ENCODE measurements at regions of chr1 and their contacts with region 1.

Region 1: GRCh38 chr1:185317034-185317885 is at the start of gene IVNS1ABP:
- DNase-seq: peak; percentile 91 to 99 (median 94)
- ATAC-seq: peak; percentile 72
- H3K4me3 ChIP-seq: peak within 1 kb of the TSS; percentile 92 to 97
- H3K4me3 Mint-ChIP-seq: peak within 1 kb of the TSS; percentile 97
- H3K27ac ChIP-seq: peak within 1 kb of the TSS; percentile 97
- H3K27ac Mint-ChIP-seq: peak within 1 kb of the TSS; percentile 99
- H3K4me1 ChIP-seq: peaks cover 38% of the 10 kb centered on the region
- H3K4me1 Mint-ChIP-seq: peaks cover 49% of the 10 kb centered on the region
- H3K27me3 ChIP-seq: no peaks in the 10 kb centered on the region
- H3K27me3 Mint-ChIP-seq: no peaks in the 10 kb centered on the region
- CTCF ChIP-seq: no peak
- total RNA-seq, gene IVNS1ABP: 227 to 237 TPM

Region 2: DNA sequence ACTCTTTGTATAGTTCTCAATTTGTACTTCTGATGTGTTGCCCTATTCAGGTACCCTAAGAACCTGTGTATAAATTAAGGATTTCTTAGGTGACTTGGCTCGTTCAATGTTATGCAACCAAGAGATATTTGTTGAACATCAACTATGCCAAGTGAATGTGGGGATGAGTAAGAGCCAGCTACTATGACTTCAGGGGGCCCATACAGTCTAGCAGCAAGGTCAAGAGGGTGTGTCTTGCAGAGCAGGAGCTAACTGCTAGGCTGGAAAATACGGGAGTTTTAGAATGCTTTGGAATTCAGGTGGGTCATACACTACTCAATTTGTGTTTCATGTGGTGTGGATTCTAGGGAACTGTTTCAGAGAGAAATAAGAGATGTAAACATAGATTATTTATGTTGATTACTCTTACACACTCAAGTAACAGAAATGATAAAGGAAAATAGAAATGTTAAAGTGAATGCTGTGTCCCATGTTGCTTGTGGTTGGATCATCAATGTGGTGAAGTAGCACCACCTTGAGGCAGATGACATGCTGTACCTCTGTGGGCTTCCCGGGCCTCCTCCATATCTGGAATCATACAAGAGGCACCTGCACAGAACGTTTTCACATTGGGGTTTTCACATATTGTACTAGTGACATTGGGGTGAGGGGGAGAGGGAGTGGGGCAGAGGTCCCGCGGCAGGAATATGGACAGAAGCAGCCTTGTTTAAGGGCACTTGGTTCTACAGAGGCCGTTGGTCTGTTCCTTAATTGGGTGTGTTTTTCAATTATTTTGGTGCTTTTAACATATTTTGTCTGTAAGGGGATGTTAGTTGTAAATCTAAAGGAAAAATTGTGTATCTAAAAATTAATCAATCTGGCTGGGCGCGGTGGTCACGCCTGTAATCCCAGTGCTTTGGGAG is 1694.1 kb before region 1 on chr1:
- CTCF ChIA-PET with region 1: no interaction called
- POLR2A ChIA-PET with region 1: no interaction called
- intact Hi-C with region 1: loop called in 1 of 2 experiments (anchors 10 kb)
- DNase-seq: peak in 8 of 9 experiments; percentile 13 to 72 (median 52)
- ATAC-seq: peak; percentile 99
- H3K4me3 ChIP-seq: no peak overlapping the region
- H3K4me3 Mint-ChIP-seq: no peak overlapping the region
- H3K27ac ChIP-seq: no peak overlapping the region
- H3K27ac Mint-ChIP-seq: peak overlapping the region; percentile 89
- H3K4me1 ChIP-seq: peaks cover 6% of the 10 kb centered on the region
- H3K4me1 Mint-ChIP-seq: peaks cover 38% of the 10 kb centered on the region
- H3K27me3 ChIP-seq: no peaks in the 10 kb centered on the region
- H3K27me3 Mint-ChIP-seq: no peaks in the 10 kb centered on the region
- CTCF ChIP-seq: peak; percentile 51

Region 3: GRCh38 chr1:183711741-183712361 is 1605.4 kb before region 1 on chr1:
- CTCF ChIA-PET with region 1: no interaction called
- POLR2A ChIA-PET with region 1: no interaction called
- intact Hi-C with region 1: no loop called
- DNase-seq: no peak
- ATAC-seq: no peak
- H3K4me3 ChIP-seq: no peak overlapping the region
- H3K4me3 Mint-ChIP-seq: no peak overlapping the region
- H3K27ac ChIP-seq: no peak overlapping the region
- H3K27ac Mint-ChIP-seq: no peak overlapping the region
- H3K4me1 ChIP-seq: no peaks in the 10 kb centered on the region
- H3K4me1 Mint-ChIP-seq: no peaks in the 10 kb centered on the region
- H3K27me3 ChIP-seq: no peaks in the 10 kb centered on the region
- H3K27me3 Mint-ChIP-seq: no peaks in the 10 kb centered on the region
- CTCF ChIP-seq: no peak

Region 4: GRCh38 chr1:185156854-185157598 is 160.2 kb before region 1 on chr1 and contains the starts of genes SWT1 and TRMT1L:
- CTCF ChIA-PET with region 1: interaction called, 4 read pairs
- POLR2A ChIA-PET with region 1: interaction called, 21 read pairs
- intact Hi-C with region 1: loop called (anchors 1 kb)
- DNase-seq: peak; percentile 96 to 99 (median 98)
- ATAC-seq: peak; percentile 89
- H3K4me3 ChIP-seq: peak within 1 kb of the TSS; percentile 75 to 97
- H3K4me3 Mint-ChIP-seq: peak within 1 kb of the TSS; percentile 99
- H3K27ac ChIP-seq: peak within 1 kb of the TSS; percentile 86 to 98
- H3K27ac Mint-ChIP-seq: peak within 1 kb of the TSS; percentile 99
- H3K4me1 ChIP-seq: peaks cover 17% of the 10 kb centered on the region
- H3K4me1 Mint-ChIP-seq: peaks cover 49% of the 10 kb centered on the region
- H3K27me3 ChIP-seq: no peaks in the 10 kb centered on the region
- H3K27me3 Mint-ChIP-seq: no peaks in the 10 kb centered on the region
- CTCF ChIP-seq: no peak
- total RNA-seq, gene SWT1: 3.0 to 3.9 TPM
- total RNA-seq, gene TRMT1L: 3.0 to 5.1 TPM

Region 5: GRCh38 chr1:185291652-185292051 is 25.6 kb before region 1 on chr1:
- CTCF ChIA-PET with region 1: interaction called, 3 read pairs
- POLR2A ChIA-PET with region 1: interaction called, 18 read pairs
- intact Hi-C with region 1: no loop called
- DNase-seq: no peak
- ATAC-seq: no peak
- H3K4me3 ChIP-seq: no peak overlapping the region
- H3K4me3 Mint-ChIP-seq: no peak overlapping the region
- H3K27ac ChIP-seq: no peak overlapping the region
- H3K27ac Mint-ChIP-seq: peak overlapping the region; percentile 45
- H3K4me1 ChIP-seq: no peaks in the 10 kb centered on the region
- H3K4me1 Mint-ChIP-seq: peaks cover 31% of the 10 kb centered on the region
- H3K27me3 ChIP-seq: no peaks in the 10 kb centered on the region
- H3K27me3 Mint-ChIP-seq: no peaks in the 10 kb centered on the region
- CTCF ChIP-seq: no peak

Region 6: GRCh38 chr1:185351734-185352466 is 34.6 kb after region 1 on chr1:
- CTCF ChIA-PET with region 1: no interaction called
- POLR2A ChIA-PET with region 1: no interaction called
- intact Hi-C with region 1: no loop called
- DNase-seq: no peak
- ATAC-seq: no peak
- H3K4me3 ChIP-seq: no peak overlapping the region
- H3K4me3 Mint-ChIP-seq: no peak overlapping the region
- H3K27ac ChIP-seq: no peak overlapping the region
- H3K27ac Mint-ChIP-seq: no peak overlapping the region
- H3K4me1 ChIP-seq: no peaks in the 10 kb centered on the region
- H3K4me1 Mint-ChIP-seq: peaks cover 9% of the 10 kb centered on the region
- H3K27me3 ChIP-seq: no peaks in the 10 kb centered on the region
- H3K27me3 Mint-ChIP-seq: no peaks in the 10 kb centered on the region
- CTCF ChIP-seq: no peak

Region 7: DNA sequence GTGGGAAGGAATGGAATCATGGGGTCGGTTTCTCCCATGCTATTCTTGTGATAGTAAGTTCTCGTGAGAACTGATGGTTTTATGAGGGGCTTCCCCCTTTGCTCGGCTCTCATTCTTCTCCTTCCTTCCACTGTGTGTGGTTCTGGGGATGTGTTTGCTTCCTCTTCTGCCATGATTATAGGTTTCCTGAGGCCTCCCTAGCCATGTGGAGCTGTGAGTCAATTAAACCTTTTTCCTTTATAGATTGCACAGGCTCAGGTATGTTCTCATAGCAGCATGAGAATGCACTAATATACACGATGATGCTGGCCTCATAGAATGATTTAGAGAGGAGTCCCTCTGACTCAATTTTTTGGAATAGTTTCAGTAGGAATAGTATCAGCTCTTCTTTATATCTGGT is 195.2 kb after region 1 on chr1:
- CTCF ChIA-PET with region 1: no interaction called
- POLR2A ChIA-PET with region 1: no interaction called
- intact Hi-C with region 1: no loop called
- DNase-seq: no peak
- ATAC-seq: no peak
- H3K4me3 ChIP-seq: no peak overlapping the region
- H3K4me3 Mint-ChIP-seq: no peak overlapping the region
- H3K27ac ChIP-seq: no peak overlapping the region
- H3K27ac Mint-ChIP-seq: no peak overlapping the region
- H3K4me1 ChIP-seq: no peaks in the 10 kb centered on the region
- H3K4me1 Mint-ChIP-seq: no peaks in the 10 kb centered on the region
- H3K27me3 ChIP-seq: no peaks in the 10 kb centered on the region
- H3K27me3 Mint-ChIP-seq: no peaks in the 10 kb centered on the region
- CTCF ChIP-seq: no peak

Region 8: DNA sequence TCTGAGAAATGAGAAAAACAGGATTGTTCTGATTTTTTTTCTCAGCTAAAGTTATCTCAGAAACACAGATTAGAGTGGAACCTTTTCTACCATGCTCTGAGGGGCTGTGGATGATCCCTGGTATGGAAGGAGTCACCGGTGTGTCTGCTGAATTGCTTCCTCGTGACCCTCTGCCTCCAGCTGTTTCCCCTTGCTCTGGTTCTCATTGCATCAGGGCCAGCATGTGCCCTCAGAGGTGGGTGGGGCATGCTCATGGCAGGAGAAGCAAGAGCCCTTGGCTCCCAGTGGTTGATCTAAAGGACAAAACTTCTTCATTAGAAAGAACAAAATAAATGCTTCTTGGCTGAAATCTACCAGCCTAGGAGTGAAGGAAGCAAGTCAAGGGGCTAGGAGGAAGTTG is 233.7 kb after region 1 on chr1:
- CTCF ChIA-PET with region 1: no interaction called
- POLR2A ChIA-PET with region 1: no interaction called
- intact Hi-C with region 1: no loop called
- DNase-seq: no peak
- ATAC-seq: no peak
- H3K4me3 ChIP-seq: no peak overlapping the region
- H3K4me3 Mint-ChIP-seq: no peak overlapping the region
- H3K27ac ChIP-seq: no peak overlapping the region
- H3K27ac Mint-ChIP-seq: no peak overlapping the region
- H3K4me1 ChIP-seq: no peaks in the 10 kb centered on the region
- H3K4me1 Mint-ChIP-seq: no peaks in the 10 kb centered on the region
- H3K27me3 ChIP-seq: no peaks in the 10 kb centered on the region
- H3K27me3 Mint-ChIP-seq: no peaks in the 10 kb centered on the region
- CTCF ChIP-seq: no peak

Region 9: DNA sequence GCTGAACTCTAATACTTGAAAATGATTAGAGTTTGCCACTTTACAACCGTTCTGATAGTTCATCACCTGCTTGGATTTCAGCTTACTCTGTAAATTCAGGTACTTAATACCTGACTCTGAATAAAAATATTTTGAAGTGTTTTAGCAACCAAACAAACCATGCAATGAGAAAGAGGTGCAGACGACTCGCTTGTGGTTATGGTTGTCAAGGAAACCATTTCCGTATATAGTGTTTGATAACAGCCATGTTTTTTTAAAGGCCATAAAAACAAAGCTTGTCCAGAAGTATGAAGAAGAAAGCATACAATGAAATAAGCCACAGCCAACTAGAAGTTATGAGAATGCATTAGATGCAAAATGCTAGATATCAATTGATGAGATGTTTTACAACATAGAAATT is 249.7 kb after region 1 on chr1:
- CTCF ChIA-PET with region 1: interaction called, 14 read pairs
- POLR2A ChIA-PET with region 1: interaction called, 29 read pairs
- intact Hi-C with region 1: loop called (anchors 1 kb)
- DNase-seq: peak in 7 of 9 experiments; percentile 27 to 95 (median 60)
- ATAC-seq: peak; percentile 78
- H3K4me3 ChIP-seq: peak overlapping the region in 1 of 2 experiments; percentile 9
- H3K4me3 Mint-ChIP-seq: peak overlapping the region; percentile 74
- H3K27ac ChIP-seq: peak overlapping the region; percentile 79 to 93
- H3K27ac Mint-ChIP-seq: peak overlapping the region; percentile 97
- H3K4me1 ChIP-seq: peaks cover 46% of the 10 kb centered on the region
- H3K4me1 Mint-ChIP-seq: peaks cover 82% of the 10 kb centered on the region
- H3K27me3 ChIP-seq: no peaks in the 10 kb centered on the region
- H3K27me3 Mint-ChIP-seq: no peaks in the 10 kb centered on the region
- CTCF ChIP-seq: no peak

Region 10: GRCh38 chr1:185681034-185681633 is 363.9 kb after region 1 on chr1:
- CTCF ChIA-PET with region 1: interaction called, 30 read pairs
- POLR2A ChIA-PET with region 1: interaction called, 16 read pairs
- intact Hi-C with region 1: no loop called
- DNase-seq: peak in 4 of 9 experiments; percentile 15 to 67 (median 40)
- ATAC-seq: peak; percentile 51
- H3K4me3 ChIP-seq: no peak overlapping the region
- H3K4me3 Mint-ChIP-seq: no peak overlapping the region
- H3K27ac ChIP-seq: no peak overlapping the region
- H3K27ac Mint-ChIP-seq: no peak overlapping the region
- H3K4me1 ChIP-seq: peaks cover 10% of the 10 kb centered on the region
- H3K4me1 Mint-ChIP-seq: peaks cover 26% of the 10 kb centered on the region
- H3K27me3 ChIP-seq: no peaks in the 10 kb centered on the region
- H3K27me3 Mint-ChIP-seq: no peaks in the 10 kb centered on the region
- CTCF ChIP-seq: peak; percentile 30

Measured in CD8-positive, alpha-beta T cell (primary cell).